Naive thymus-derived CD4-positive, alpha-beta T cell (primary cell): ENCODE measurements at regions of chr6 and their contacts with region 1.

Region 1: DNA sequence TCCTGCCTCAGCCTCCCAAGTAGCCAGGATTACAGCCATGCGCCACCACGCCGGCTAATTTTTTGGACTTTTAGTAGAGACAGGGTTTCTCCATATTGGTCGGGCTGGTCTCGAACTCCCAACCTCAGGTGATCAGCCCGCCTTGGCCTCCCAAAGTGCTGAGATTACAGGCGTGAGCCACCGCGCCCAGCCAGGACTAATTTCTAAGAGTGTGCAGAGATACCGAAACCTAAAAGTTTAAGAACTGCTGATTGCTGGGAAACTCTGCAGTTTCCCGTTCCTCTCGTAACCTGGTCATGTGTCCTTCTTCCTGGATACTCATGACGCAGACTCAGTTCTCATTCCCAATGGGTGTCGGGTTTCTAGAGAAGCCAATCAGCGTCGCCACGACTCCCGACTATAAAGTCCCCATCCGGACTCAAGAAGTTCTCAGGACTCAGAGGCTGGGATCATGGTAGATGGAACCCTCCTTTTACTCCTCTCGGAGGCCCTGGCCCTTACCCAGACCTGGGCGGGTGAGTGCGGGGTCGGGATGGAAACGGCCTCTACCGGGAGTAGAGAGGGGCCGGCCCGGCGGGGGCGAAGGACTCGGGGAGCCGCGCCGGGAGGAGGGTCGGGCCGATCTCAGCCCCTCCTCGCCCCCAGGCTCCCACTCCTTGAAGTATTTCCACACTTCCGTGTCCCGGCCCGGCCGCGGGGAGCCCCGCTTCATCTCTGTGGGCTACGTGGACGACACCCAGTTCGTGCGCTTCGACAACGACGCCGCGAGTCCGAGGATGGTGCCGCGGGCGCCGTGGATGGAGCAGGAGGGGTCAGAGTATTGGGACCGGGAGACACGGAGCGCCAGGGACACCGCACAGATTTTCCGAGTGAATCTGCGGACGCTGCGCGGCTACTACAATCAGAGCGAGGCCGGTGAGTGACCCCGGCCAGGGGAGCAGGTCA is at the start of gene HLA-E:
- DNase-seq: peak; percentile 62 to 99 (median 95)
- ATAC-seq: peak; percentile 89
- H3K4me3 ChIP-seq: peak within 1 kb of the TSS; percentile 83
- H3K4me3 Mint-ChIP-seq: peak within 1 kb of the TSS; percentile 94 to 100 (median 99)
- H3K27ac ChIP-seq: peak within 1 kb of the TSS; percentile 97
- H3K27ac Mint-ChIP-seq: peak within 1 kb of the TSS; percentile 96 to 99 (median 99)
- H3K4me1 ChIP-seq: peaks cover 26 to 33% of the 10 kb centered on the region in 2 donors
- H3K4me1 Mint-ChIP-seq: peaks cover 33 to 61% (median 46%) of the 10 kb centered on the region in 7 donors
- H3K27me3 ChIP-seq: no peaks in the 10 kb centered on the region
- H3K27me3 Mint-ChIP-seq: peaks cover 0 to 7% (median 0%) of the 10 kb centered on the region in 5 donors
- total RNA-seq, gene HLA-E: 614 to 1,412 (median 1,095) TPM

Region 2: GRCh38 chr6:30500421-30501355 is 11.3 kb after region 1 on chr6:
- CTCF ChIA-PET with region 1: interaction called, 9 read pairs
- POLR2A ChIA-PET with region 1: interaction called, 652 read pairs
- intact Hi-C with region 1: loop called in 1 of 2 experiments (anchors 1 kb)
- DNase-seq: no peak
- ATAC-seq: peak; percentile 35
- H3K4me3 ChIP-seq: peak overlapping the region; percentile 48
- H3K4me3 Mint-ChIP-seq: peak overlapping the region; percentile 76 to 89 (median 86)
- H3K27ac ChIP-seq: peak overlapping the region; percentile 36
- H3K27ac Mint-ChIP-seq: peak overlapping the region; percentile 39 to 93 (median 85)
- H3K4me1 ChIP-seq: peaks cover 9 to 31% of the 10 kb centered on the region in 2 donors
- H3K4me1 Mint-ChIP-seq: peaks cover 24 to 50% (median 46%) of the 10 kb centered on the region in 7 donors
- H3K27me3 ChIP-seq: no peaks in the 10 kb centered on the region
- H3K27me3 Mint-ChIP-seq: no peaks in the 10 kb centered on the region

Region 3: GRCh38 chr6:30508890-30509736 is 19.8 kb after region 1 on chr6:
- CTCF ChIA-PET with region 1: interaction called, 41 read pairs
- POLR2A ChIA-PET with region 1: interaction called, 652 read pairs
- intact Hi-C with region 1: loop called (anchors 1 kb)
- DNase-seq: peak in 7 of 9 donors; percentile 72 to 88 (median 86)
- ATAC-seq: peak; percentile 90
- H3K4me3 ChIP-seq: peak overlapping the region; percentile 55
- H3K4me3 Mint-ChIP-seq: peak overlapping the region; percentile 60 to 89 (median 80)
- H3K27ac ChIP-seq: peak overlapping the region; percentile 43
- H3K27ac Mint-ChIP-seq: peak overlapping the region; percentile 73 to 97 (median 85)
- H3K4me1 ChIP-seq: peaks cover 44 to 73% of the 10 kb centered on the region in 2 donors
- H3K4me1 Mint-ChIP-seq: peaks cover 38 to 78% (median 59%) of the 10 kb centered on the region in 7 donors
- H3K27me3 ChIP-seq: no peaks in the 10 kb centered on the region
- H3K27me3 Mint-ChIP-seq: no peaks in the 10 kb centered on the region

Region 4: GRCh38 chr6:30515932-30516753 is 26.8 kb after region 1 on chr6:
- CTCF ChIA-PET with region 1: interaction called, 41 read pairs
- POLR2A ChIA-PET with region 1: interaction called, 652 read pairs
- intact Hi-C with region 1: loop called (anchors 1 kb)
- DNase-seq: peak; percentile 60 to 97 (median 95)
- ATAC-seq: peak; percentile 93
- H3K4me3 ChIP-seq: peak overlapping the region; percentile 64
- H3K4me3 Mint-ChIP-seq: peak overlapping the region; percentile 82 to 96 (median 89)
- H3K27ac ChIP-seq: peak overlapping the region; percentile 82
- H3K27ac Mint-ChIP-seq: peak overlapping the region; percentile 97 to 100 (median 99)
- H3K4me1 ChIP-seq: peaks cover 20 to 62% of the 10 kb centered on the region in 2 donors
- H3K4me1 Mint-ChIP-seq: peaks cover 31 to 91% (median 62%) of the 10 kb centered on the region in 7 donors
- H3K27me3 ChIP-seq: no peaks in the 10 kb centered on the region
- H3K27me3 Mint-ChIP-seq: no peaks in the 10 kb centered on the region

Region 5: DNA sequence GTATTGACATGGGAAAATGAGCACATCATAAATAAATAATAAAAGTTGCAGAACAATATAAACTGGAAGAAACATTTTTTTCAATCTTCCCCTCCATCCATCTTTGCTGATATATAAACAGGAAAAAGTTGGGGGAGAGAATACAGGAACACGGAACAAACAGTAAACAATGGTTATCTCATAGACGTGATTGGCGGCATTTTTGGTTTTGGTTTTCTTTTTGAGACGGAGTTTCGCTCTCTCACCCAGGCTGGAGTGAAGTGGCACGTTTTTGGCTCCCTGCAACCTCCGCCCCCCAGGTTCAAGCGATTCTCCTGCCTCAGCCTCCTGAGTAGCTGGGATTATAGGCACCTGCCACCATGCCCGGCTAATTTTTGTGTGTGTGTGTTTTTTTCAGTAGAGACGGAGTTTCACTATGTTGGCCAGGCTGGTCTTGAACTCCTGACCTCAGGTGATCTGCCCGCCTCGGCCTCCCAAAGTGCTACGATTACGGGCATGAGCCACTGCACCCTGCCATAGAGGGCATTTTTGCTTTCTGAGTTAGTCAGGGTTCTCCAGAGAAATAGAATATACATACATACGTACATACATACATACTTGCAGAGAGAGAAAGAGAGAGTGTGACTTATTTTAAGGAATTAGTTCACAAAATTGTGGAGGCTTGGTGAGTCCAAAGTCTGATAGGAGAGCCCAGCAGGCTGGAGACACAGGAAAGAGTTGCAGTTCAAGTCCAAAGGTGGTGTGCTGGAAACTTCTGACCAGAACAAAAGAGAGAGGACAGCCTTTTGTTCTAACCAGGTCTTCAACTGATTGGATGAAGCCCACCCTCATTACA is 44.3 kb after region 1 on chr6:
- CTCF ChIA-PET with region 1: interaction called, 263 read pairs
- POLR2A ChIA-PET with region 1: interaction called, 199 read pairs
- intact Hi-C with region 1: loop called (anchors 1 kb)
- DNase-seq: no peak
- ATAC-seq: peak; percentile 29
- H3K4me3 ChIP-seq: no peak overlapping the region
- H3K4me3 Mint-ChIP-seq: peak overlapping the region in 8 of 10 donors; percentile 49 to 91 (median 64)
- H3K27ac ChIP-seq: no peak overlapping the region
- H3K27ac Mint-ChIP-seq: peak overlapping the region in 7 of 9 donors; percentile 53 to 91 (median 81)
- H3K4me1 ChIP-seq: peaks cover 19 to 24% of the 10 kb centered on the region in 2 donors
- H3K4me1 Mint-ChIP-seq: peaks cover 16 to 41% (median 32%) of the 10 kb centered on the region in 7 donors
- H3K27me3 ChIP-seq: no peaks in the 10 kb centered on the region
- H3K27me3 Mint-ChIP-seq: peaks cover 0 to 3% (median 0%) of the 10 kb centered on the region in 5 donors

Region 6: GRCh38 chr6:30678964-30679726 is 189.8 kb after region 1 on chr6:
- CTCF ChIA-PET with region 1: interaction called, 9 read pairs
- POLR2A ChIA-PET with region 1: interaction called, 14 read pairs
- intact Hi-C with region 1: no loop called
- DNase-seq: peak; percentile 86 to 97 (median 92)
- ATAC-seq: peak; percentile 65
- H3K4me3 ChIP-seq: peak overlapping the region; percentile 98
- H3K4me3 Mint-ChIP-seq: peak overlapping the region; percentile 90 to 100 (median 97)
- H3K27ac ChIP-seq: peak overlapping the region; percentile 95
- H3K27ac Mint-ChIP-seq: peak overlapping the region; percentile 85 to 99 (median 97)
- H3K4me1 ChIP-seq: peaks cover 5 to 24% of the 10 kb centered on the region in 2 donors
- H3K4me1 Mint-ChIP-seq: peaks cover 20 to 47% (median 38%) of the 10 kb centered on the region in 7 donors
- H3K27me3 ChIP-seq: no peaks in the 10 kb centered on the region
- H3K27me3 Mint-ChIP-seq: no peaks in the 10 kb centered on the region